ENCODE measurements at regions of chr9 and their contacts with region 1.

Region 1: DNA sequence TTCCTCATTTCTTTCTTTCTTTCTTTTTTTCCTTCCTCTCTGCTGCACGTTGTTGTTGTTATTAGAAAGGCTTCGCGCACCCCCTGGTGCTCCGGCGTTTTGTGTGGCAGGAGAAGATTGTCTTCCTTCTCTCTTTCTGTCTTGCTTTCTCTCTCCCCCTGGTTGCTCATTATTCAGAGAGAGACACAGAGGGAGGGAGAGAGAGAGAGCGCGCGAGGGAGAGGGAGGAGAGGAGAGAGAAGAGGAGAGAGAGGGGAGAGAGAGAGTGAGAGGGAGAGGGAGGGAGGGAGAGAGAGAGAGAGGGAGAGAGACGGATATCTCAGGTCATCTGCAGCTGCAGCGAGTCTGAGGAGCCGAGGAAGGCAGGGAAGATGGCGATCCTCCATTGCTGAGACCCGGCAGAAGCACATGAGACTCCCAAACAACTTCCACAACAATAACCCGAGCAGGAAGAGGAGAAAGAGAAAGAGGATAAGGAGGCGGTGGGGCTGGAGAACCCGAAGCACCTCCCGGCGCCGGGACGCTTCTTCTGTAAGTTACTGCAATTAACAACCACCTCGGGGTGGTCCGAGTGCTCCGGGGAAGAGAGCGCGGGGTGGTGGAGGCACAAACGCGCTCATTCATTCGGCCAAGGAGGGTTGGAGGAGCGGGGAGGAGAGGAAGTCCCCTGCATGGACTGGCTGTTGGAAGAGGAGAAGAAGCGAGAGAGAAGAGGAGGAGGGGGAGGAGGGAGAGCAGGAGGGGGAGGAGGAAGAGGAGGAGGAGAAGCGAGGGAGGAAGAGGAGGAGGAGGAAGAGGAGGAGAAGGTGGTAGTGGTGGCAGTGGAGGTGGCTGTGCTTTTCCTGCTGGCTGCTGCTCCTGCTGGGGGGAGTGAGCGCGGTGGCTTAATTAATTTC is at the start of gene ZNF462:
- DNase-seq: peak; percentile 66
- H3K4me3 ChIP-seq: peak within 1 kb of the TSS; percentile 69 to 97 (median 97)
- H3K27ac ChIP-seq: peak within 1 kb of the TSS; percentile 54
- H3K4me1 ChIP-seq: peaks cover 17% of the 10 kb centered on the region
- H3K27me3 ChIP-seq: no peaks in the 10 kb centered on the region
- CTCF ChIP-seq: peak in 1 of 2 donors; percentile 14
- POLR2A ChIP-seq: peak; percentile 74
- total RNA-seq, gene ZNF462: 24.7 and 27.0 TPM in 2 replicates

Region 2: GRCh38 chr9:105842023-105842644 is 1020.9 kb before region 1 on chr9:
- CTCF ChIA-PET with region 1: interaction called, 3 read pairs
- POLR2A ChIA-PET with region 1: no interaction called
- dilution Hi-C with region 1: no loop called
- intact Hi-C with region 1: loop called (anchors 1 kb)
- DNase-seq: peak; percentile 41
- H3K4me3 ChIP-seq: no peak overlapping the region
- H3K27ac ChIP-seq: no peak overlapping the region
- H3K4me1 ChIP-seq: no peaks in the 10 kb centered on the region
- H3K27me3 ChIP-seq: no peaks in the 10 kb centered on the region
- CTCF ChIP-seq: peak; percentile 57 to 58
- POLR2A ChIP-seq: no peak

Region 3: GRCh38 chr9:106602344-106602743 is 260.7 kb before region 1 on chr9:
- CTCF ChIA-PET with region 1: no interaction called
- POLR2A ChIA-PET with region 1: no interaction called
- dilution Hi-C with region 1: no loop called
- intact Hi-C with region 1: no loop called
- DNase-seq: no peak
- H3K4me3 ChIP-seq: no peak overlapping the region
- H3K27ac ChIP-seq: no peak overlapping the region
- H3K4me1 ChIP-seq: no peaks in the 10 kb centered on the region
- H3K27me3 ChIP-seq: no peaks in the 10 kb centered on the region
- CTCF ChIP-seq: no peak
- POLR2A ChIP-seq: no peak

Region 4: DNA sequence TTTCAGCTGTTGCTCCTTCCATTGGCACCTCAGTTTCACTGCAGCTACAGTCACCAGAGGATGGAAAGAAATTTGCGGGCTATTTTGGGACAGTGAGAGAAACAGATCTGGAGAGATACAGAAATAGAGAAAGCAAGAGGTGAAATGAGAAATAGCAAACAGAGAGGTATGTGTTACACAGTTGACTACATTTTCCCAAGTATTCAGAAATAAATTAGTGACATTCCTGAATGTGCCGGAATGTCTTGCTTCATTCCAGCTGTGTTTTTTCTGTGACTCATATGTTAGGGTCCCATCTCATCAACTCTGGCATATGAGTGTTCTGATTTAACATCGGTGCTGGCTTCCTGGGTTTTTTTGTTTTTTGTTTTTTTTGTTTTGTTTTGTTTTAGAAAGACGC is 63.9 kb before region 1 on chr9:
- CTCF ChIA-PET with region 1: no interaction called
- POLR2A ChIA-PET with region 1: no interaction called
- dilution Hi-C with region 1: no loop called
- intact Hi-C with region 1: loop called (anchors 1 kb)
- DNase-seq: peak; percentile 81
- H3K4me3 ChIP-seq: no peak overlapping the region
- H3K27ac ChIP-seq: peak overlapping the region; percentile 88
- H3K4me1 ChIP-seq: peaks cover 18% of the 10 kb centered on the region
- H3K27me3 ChIP-seq: no peaks in the 10 kb centered on the region
- CTCF ChIP-seq: no peak
- POLR2A ChIP-seq: no peak

Region 5: DNA sequence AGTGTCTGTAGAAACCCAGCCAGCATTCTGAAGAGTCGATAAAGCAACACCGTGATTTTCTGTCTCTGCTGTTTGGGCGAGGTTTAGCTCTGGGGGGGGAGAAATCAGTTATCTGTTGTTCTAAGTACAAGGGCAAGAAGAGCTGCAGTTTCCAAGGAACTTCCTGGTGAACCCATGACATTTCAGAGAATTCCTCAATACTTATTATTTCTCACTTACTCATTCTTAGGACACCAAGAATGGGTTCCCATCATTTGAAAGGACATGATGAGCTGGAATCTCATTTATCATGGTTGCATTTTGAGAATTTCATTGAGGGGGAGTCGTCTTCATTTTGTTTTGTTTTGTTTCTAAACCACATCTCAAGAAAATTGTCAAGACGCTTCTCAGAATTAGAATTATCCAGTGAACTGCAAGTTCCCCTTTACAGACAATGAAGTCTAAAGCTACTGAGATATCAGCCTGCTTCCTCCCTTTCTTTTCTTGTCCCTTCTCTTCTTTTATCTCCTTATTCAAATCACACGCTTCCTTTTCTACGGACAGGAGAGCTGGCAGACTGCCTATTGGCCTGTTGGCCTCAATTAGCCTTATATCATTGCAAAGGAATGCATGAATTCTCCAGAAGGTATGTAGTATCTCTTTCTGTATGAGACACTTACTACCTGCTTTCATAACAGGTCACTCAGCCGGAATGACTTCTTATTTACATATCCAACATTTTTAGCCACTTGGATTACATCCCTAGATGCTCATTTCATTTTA is 53.6 kb after region 1 on chr9:
- CTCF ChIA-PET with region 1: interaction called, 4 read pairs
- POLR2A ChIA-PET with region 1: no interaction called
- dilution Hi-C with region 1: no loop called
- intact Hi-C with region 1: loop called (anchors 1 kb)
- DNase-seq: peak; percentile 89
- H3K4me3 ChIP-seq: peak overlapping the region in 1 of 3 experiments; percentile 19
- H3K27ac ChIP-seq: peak overlapping the region; percentile 92
- H3K4me1 ChIP-seq: peaks cover 33% of the 10 kb centered on the region
- H3K27me3 ChIP-seq: no peaks in the 10 kb centered on the region
- CTCF ChIP-seq: no peak
- POLR2A ChIP-seq: peak; percentile 29

Region 6: GRCh38 chr9:107000218-107000617 is 137.1 kb after region 1 on chr9:
- CTCF ChIA-PET with region 1: no interaction called
- POLR2A ChIA-PET with region 1: no interaction called
- dilution Hi-C with region 1: no loop called
- intact Hi-C with region 1: loop called (anchors 5 kb)
- DNase-seq: no peak
- H3K4me3 ChIP-seq: no peak overlapping the region
- H3K27ac ChIP-seq: no peak overlapping the region
- H3K4me1 ChIP-seq: no peaks in the 10 kb centered on the region
- H3K27me3 ChIP-seq: no peaks in the 10 kb centered on the region
- CTCF ChIP-seq: no peak
- POLR2A ChIP-seq: no peak

Region 7: GRCh38 chr9:107172160-107172978 is 309.3 kb after region 1 on chr9:
- CTCF ChIA-PET with region 1: no interaction called
- POLR2A ChIA-PET with region 1: no interaction called
- dilution Hi-C with region 1: no loop called
- intact Hi-C with region 1: loop called (anchors 2 kb)
- DNase-seq: peak; percentile 77
- H3K4me3 ChIP-seq: no peak overlapping the region
- H3K27ac ChIP-seq: no peak overlapping the region
- H3K4me1 ChIP-seq: no peaks in the 10 kb centered on the region
- H3K27me3 ChIP-seq: no peaks in the 10 kb centered on the region
- CTCF ChIP-seq: peak; percentile 69 to 74
- POLR2A ChIP-seq: no peak

Measured in endothelial cell of umbilical vein (primary cell).